ENCODE measurements at regions of chr6 and their contacts with region 1.

Region 1: GRCh38 chr6:43774776-43775534 is 4.9 kb downstream of the VEGFA start:
- DNase-seq: no peak
- H3K4me3 ChIP-seq: peak overlapping the region; percentile 98
- CTCF ChIP-seq: peak; percentile 89

Region 2: DNA sequence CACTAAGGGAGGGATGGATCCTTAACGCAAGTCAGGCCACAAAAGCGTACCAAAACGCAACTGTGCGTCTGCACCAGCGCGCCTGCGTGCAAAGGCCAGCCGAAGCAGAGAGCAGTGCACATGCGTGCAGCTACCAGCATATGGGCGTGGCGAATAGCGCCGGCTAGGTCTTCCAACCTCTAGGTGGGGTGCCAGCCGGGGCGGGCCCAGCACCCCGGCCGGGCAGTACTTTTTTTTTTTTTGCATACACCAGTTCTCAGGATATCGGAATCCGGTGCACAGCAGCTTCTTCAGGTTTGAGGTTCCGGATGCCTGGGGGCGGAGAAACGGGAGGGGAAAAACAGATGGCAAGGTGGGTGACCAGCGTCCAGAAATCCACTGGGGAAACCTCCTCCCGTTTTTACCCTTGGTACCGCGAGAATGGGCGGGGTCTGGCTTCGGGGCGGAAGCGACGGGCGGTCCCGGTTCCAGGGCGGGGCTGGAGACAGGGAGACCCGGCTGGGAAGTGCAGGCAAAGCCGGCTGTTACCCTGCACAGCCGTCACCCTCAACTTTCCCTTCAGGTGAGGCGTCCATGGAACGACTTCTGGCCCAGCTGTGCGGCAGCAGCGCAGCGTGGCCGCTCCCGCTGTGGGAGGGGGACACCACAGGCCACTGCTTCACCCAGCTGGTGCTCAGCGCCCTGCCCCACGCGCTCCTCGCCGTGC is 347.4 kb before region 1 on chr6 and contains the start of gene ABCC10:
- CTCF ChIA-PET with region 1: no interaction called
- POLR2A ChIA-PET with region 1: no interaction called
- DNase-seq: peak; percentile 69
- H3K4me3 ChIP-seq: peak within 1 kb of the TSS; percentile 96
- CTCF ChIP-seq: peak; percentile 12

Region 3: GRCh38 chr6:43667245-43668150 is 107.5 kb before region 1 on chr6:
- CTCF ChIA-PET with region 1: interaction called, 36 read pairs
- POLR2A ChIA-PET with region 1: interaction called, 9 read pairs
- DNase-seq: no peak
- H3K4me3 ChIP-seq: peak overlapping the region; percentile 36
- CTCF ChIP-seq: peak; percentile 99

Region 4: DNA sequence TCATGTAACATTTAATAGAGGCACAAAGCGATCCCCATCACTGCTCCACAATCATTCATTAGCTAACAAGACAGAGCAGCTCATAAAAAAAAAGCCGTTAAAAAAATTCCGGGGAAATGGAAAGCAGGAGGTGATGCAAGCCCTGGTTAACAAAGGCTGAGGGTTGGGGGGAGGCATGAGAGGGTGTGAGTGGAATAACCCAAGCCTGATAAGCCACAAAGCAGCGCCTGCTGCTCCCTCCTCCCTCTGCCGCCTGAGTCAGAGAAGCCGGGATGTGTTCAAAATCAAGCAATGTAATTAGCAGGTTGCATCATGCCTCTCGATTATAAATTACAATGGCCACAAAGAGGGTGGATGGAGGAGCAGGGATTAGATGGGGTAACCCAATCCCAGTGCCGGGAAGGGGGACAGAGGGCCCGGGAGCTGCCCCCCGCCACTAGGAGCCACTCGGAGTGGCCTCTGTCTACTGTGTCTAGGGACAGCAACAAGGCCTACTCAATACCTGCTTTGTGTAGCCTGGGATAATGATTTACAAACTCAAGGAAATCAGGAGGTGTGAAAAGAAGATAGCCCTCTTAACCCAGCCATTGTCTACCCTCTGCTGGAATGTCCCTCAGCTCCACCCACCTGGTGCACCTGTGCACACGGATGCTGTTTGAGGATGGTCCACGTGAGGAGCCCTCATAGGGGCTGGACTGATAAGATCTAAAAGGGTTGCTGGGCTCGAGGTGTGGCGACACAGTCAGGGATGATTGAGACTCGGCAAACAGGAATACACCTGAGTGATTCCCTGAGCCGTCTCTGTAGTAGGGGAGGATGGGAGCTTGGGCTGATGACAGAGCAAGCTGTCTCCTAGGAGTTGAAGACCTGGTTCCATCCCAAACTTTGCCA is 151.9 kb after region 1 on chr6:
- CTCF ChIA-PET with region 1: interaction called, 15 read pairs
- POLR2A ChIA-PET with region 1: interaction called, 8 read pairs
- DNase-seq: peak; percentile 81
- H3K4me3 ChIP-seq: no peak overlapping the region
- CTCF ChIP-seq: no peak

Region 5: GRCh38 chr6:44002593-44003344 is 227.8 kb after region 1 on chr6:
- CTCF ChIA-PET with region 1: interaction called, 20 read pairs
- POLR2A ChIA-PET with region 1: interaction called, 4 read pairs
- DNase-seq: no peak
- H3K4me3 ChIP-seq: peak overlapping the region; percentile 50
- CTCF ChIP-seq: peak; percentile 41

Region 6: DNA sequence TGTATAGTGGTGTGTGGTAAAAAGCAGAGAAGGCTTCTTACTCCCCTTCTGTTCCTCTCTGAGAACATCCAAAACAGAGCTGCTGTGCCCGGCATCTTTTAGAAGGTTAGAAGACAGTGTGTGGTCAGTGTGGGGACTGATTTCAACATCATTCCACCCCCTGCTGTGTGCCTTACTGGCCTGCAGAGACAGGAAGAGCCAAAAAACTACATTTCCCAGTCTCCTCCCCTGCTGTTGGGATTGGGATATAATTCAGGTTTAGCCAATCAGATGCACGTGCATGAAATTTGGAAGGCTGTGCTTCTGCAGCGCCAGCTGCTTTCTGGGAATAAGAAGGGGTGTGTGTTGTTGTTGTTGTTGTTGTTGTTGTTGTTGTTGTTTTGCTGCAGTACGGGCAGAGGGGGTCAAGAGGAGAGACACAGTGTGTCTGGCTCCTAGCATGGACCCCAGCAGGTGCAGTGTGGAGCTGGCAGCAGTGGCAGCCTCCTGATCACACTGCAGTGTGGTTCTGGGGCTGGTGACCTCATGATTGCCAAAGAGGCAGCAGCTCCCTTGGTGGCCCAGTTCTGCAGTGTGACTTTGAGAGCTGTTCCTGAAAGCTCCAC is 277.6 kb after region 1 on chr6:
- CTCF ChIA-PET with region 1: interaction called, 12 read pairs
- POLR2A ChIA-PET with region 1: interaction called, 14 read pairs
- DNase-seq: no peak
- H3K4me3 ChIP-seq: no peak overlapping the region
- CTCF ChIP-seq: no peak